MCF 10A (cell line): ENCODE measurements at regions of chr1 and their contacts with region 1.

Region 1: GRCh38 chr1:112390775-112391602 is 5.0 kb upstream of the CTTNBP2NL start:
- DNase-seq: peak; percentile 95
- H3K4me3 Mint-ChIP-seq: peak overlapping the region; percentile 75
- H3K27ac Mint-ChIP-seq: peak overlapping the region; percentile 11
- H3K4me1 Mint-ChIP-seq: peaks cover 33% of the 10 kb centered on the region
- H3K27me3 Mint-ChIP-seq: no peaks in the 10 kb centered on the region
- CTCF ChIP-seq: peak; percentile 75

Region 2: DNA sequence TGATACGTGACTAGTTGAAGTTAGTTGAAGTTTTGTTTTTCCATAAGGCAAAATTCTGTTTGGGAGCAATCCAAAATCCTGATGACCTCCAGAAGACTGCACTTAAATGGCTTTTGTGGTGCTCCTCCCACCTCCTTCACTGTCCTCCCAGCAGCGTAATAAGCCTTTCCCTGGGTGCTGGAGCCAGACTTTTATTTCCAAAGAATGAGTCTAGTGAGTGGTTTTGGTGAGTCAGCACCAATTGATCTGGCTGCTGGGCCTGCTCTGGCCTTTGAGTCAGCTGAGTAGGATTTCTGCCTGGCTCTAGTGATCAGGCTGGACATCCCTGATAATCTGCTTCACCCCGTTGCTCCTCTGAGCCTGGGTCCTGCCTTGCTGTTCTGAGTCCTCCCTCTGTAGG is 379.8 kb before region 1 on chr1:
- CTCF ChIA-PET with region 1: no interaction called
- POLR2A ChIA-PET with region 1: no interaction called
- intact Hi-C with region 1: no loop called
- DNase-seq: peak; percentile 31
- H3K4me3 Mint-ChIP-seq: no peak overlapping the region
- H3K27ac Mint-ChIP-seq: no peak overlapping the region
- H3K4me1 Mint-ChIP-seq: no peaks in the 10 kb centered on the region
- H3K27me3 Mint-ChIP-seq: peaks cover 34% of the 10 kb centered on the region
- CTCF ChIP-seq: no peak

Region 3: DNA sequence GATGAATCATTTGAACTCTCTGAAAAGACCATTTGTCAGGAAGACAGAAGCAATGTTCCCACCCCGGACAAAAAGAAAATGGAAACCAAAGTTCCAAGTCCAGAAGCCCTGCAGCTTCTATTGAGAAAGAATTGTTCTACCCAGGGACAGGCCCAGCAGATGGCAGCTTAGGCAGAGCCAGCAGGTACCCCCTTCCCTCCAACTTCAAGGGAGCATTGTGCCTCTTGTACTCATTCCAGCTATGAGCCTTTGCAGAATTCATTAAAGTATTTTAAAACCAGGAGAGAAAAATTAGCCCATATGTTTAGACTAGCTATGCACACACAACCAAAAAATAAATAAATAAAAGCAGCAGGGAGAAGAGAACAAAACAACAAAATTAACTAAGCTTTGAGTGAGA is 316.3 kb before region 1 on chr1:
- CTCF ChIA-PET with region 1: no interaction called
- POLR2A ChIA-PET with region 1: no interaction called
- intact Hi-C with region 1: no loop called
- DNase-seq: no peak
- H3K4me3 Mint-ChIP-seq: no peak overlapping the region
- H3K27ac Mint-ChIP-seq: no peak overlapping the region
- H3K4me1 Mint-ChIP-seq: no peaks in the 10 kb centered on the region
- H3K27me3 Mint-ChIP-seq: peaks cover 16% of the 10 kb centered on the region
- CTCF ChIP-seq: no peak

Region 4: DNA sequence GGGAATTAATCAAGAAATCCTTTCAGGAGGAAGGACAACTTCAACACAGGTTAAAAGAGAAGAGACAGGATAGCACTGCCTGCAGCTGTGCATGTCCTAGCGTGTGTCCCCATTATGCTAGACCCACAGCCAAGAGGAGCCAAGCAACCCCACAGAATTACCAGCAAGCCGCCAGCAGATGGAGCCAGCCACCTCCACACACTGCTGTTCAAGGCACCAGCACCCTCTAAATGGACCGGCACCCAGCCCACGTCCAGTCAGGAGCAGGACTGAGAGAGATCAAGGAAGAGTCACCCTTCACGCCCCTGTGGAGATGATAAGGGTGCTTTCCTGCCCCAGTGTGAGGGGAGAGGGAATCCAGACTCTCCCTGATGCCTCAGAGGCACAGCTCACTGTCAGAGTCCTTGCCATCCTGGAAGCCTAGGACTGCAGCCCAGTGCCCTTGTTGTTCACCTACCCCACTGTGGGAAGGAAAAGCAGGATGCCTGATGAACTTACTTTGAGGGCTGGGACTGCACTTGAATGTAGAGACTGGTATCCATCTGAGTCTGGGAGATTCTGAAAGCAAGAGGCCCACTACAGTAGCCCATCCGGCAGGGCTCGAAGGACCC is 32.1 kb before region 1 on chr1:
- CTCF ChIA-PET with region 1: interaction called, 18 read pairs
- POLR2A ChIA-PET with region 1: interaction called, 4 read pairs
- intact Hi-C with region 1: no loop called
- DNase-seq: peak; percentile 64
- H3K4me3 Mint-ChIP-seq: peak overlapping the region; percentile 62
- H3K27ac Mint-ChIP-seq: peak overlapping the region; percentile 72
- H3K4me1 Mint-ChIP-seq: peaks cover 31% of the 10 kb centered on the region
- H3K27me3 Mint-ChIP-seq: no peaks in the 10 kb centered on the region
- CTCF ChIP-seq: peak; percentile 82

Region 5: GRCh38 chr1:112439592-112439991 is 48.6 kb after region 1 on chr1:
- CTCF ChIA-PET with region 1: interaction called, 10 read pairs
- POLR2A ChIA-PET with region 1: interaction called, 3 read pairs
- intact Hi-C with region 1: no loop called
- DNase-seq: no peak
- H3K4me3 Mint-ChIP-seq: no peak overlapping the region
- H3K27ac Mint-ChIP-seq: no peak overlapping the region
- H3K4me1 Mint-ChIP-seq: peaks cover 7% of the 10 kb centered on the region
- H3K27me3 Mint-ChIP-seq: no peaks in the 10 kb centered on the region
- CTCF ChIP-seq: no peak

Region 6: DNA sequence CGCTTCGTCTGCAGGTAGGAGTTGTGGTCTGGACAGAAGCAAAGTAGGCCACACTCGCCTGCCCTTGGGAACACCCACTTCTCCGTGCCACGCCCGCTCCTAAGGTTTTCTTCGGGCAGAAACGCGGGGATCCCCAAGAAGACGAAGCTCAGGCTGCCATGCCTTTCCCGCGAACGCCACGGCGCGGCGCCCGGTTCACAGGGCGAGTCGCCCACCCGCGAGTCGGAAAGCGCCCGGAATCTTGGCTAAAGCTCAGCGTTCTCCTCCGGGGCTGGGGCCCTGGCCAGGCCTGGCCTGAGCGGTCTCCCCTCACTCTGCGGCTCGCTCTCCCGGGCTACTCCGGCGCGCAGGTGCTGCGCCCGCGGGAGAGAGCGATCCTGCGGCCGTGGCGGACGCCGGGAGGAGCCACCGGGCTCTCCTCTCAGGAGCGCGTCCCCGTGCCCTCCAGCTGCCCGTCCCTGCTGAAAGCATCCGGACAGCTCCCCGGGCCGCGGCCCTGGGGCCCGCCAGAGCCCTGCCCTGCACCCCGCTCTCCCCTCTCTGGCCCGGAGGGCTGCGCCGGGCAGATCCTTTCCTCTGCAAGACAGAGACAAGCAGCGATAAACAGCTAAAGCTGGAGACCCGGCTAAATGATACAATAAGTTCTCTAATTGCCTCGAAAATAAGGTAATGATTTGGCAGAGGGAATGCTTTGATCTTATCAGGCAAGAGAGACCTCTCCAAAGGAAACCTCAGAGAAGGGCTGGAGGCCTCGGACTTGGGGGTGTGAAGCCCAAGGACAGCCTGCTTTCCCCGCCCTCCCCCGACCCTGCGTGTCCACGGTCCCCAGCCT is 111.0 kb after region 1 on chr1:
- CTCF ChIA-PET with region 1: interaction called, 13 read pairs
- POLR2A ChIA-PET with region 1: interaction called, 3 read pairs
- intact Hi-C with region 1: no loop called
- DNase-seq: peak; percentile 69
- H3K4me3 Mint-ChIP-seq: peak overlapping the region; percentile 65
- H3K27ac Mint-ChIP-seq: no peak overlapping the region
- H3K4me1 Mint-ChIP-seq: no peaks in the 10 kb centered on the region
- H3K27me3 Mint-ChIP-seq: peaks cover 23% of the 10 kb centered on the region
- CTCF ChIP-seq: peak; percentile 56

Region 7: DNA sequence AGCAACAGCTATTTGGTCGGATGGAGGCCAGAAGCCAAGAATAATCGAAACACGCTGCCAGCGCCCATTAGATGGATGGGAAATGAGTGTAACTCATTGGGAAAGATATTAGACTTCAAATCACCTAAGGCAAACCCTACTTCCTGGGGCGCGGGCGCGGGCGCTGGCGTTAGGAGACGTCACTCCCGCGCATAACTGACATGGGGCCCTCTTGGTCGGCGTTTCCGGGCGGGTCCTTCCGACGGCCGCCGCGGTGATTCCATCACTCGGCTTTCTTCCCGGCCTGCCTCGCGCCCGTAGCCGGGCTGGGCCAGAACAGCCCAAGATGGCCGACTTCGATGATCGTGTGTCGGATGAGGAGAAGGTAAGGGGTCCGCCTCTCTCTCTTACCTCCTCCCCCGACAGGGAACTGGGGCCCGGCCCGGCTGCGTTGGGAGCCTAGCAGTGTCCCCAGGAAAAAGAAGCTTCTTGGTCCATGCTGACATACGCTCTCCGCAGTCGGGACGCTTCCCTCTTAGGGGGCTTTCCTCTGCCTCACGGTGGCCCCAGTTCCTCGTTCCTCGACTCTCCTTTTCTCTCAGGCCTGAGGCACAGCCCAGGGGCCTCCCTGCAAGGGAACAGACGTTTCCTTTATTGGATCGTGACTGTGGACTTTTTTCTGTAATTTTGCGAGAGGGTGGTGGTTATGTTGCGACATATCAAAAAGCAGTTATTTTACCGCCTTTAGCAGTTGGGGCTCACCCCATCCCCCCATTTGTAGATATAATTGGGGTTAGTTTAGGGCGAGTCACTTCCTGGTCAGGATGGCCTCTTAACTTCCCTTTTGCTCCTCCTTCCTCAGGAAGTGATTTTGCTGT is 228.8 kb after region 1 on chr1 and contains the start of gene CAPZA1:
- CTCF ChIA-PET with region 1: interaction called, 19 read pairs
- POLR2A ChIA-PET with region 1: interaction called, 57 read pairs
- intact Hi-C with region 1: loop called (anchors 1 kb)
- DNase-seq: peak; percentile 94
- H3K4me3 Mint-ChIP-seq: peak within 1 kb of the TSS; percentile 97
- H3K27ac Mint-ChIP-seq: peak within 1 kb of the TSS; percentile 95
- H3K4me1 Mint-ChIP-seq: peaks cover 12% of the 10 kb centered on the region
- H3K27me3 Mint-ChIP-seq: no peaks in the 10 kb centered on the region
- CTCF ChIP-seq: no peak
- total RNA-seq, gene CAPZA1: 150 and 174 TPM in 2 replicates

Region 8: GRCh38 chr1:112803906-112804762 is 413.1 kb after region 1 on chr1:
- CTCF ChIA-PET with region 1: interaction called, 5 read pairs
- POLR2A ChIA-PET with region 1: no interaction called
- intact Hi-C with region 1: loop called (anchors 2 kb)
- DNase-seq: peak; percentile 78
- H3K4me3 Mint-ChIP-seq: no peak overlapping the region
- H3K27ac Mint-ChIP-seq: no peak overlapping the region
- H3K4me1 Mint-ChIP-seq: peaks cover 3% of the 10 kb centered on the region
- H3K27me3 Mint-ChIP-seq: no peaks in the 10 kb centered on the region
- CTCF ChIP-seq: peak; percentile 84

Region 9: GRCh38 chr1:113242481-113242880 is 851.5 kb after region 1 on chr1:
- CTCF ChIA-PET with region 1: no interaction called
- POLR2A ChIA-PET with region 1: no interaction called
- intact Hi-C with region 1: no loop called
- DNase-seq: peak; percentile 13
- H3K4me3 Mint-ChIP-seq: no peak overlapping the region
- H3K27ac Mint-ChIP-seq: no peak overlapping the region
- H3K4me1 Mint-ChIP-seq: peaks cover 5% of the 10 kb centered on the region
- H3K27me3 Mint-ChIP-seq: no peaks in the 10 kb centered on the region
- CTCF ChIP-seq: no peak